ENCODE measurements at regions of chr15 and their contacts with region 1.

Region 1: GRCh38 chr15:23073890-23074646 is 34.7 kb upstream of the TUBGCP5 start:
- DNase-seq: no peak
- ATAC-seq: peak in 1 of 2 donors; percentile 46
- H3K4me3 ChIP-seq: no peak overlapping the region
- H3K27ac ChIP-seq: no peak overlapping the region
- H3K4me1 ChIP-seq: no peaks in the 10 kb centered on the region
- H3K27me3 ChIP-seq: peaks cover 0 to 4% (median 0%) of the 10 kb centered on the region in 3 donors
- CTCF ChIP-seq: no peak
- POLR2A ChIP-seq: no peak

Region 2: DNA sequence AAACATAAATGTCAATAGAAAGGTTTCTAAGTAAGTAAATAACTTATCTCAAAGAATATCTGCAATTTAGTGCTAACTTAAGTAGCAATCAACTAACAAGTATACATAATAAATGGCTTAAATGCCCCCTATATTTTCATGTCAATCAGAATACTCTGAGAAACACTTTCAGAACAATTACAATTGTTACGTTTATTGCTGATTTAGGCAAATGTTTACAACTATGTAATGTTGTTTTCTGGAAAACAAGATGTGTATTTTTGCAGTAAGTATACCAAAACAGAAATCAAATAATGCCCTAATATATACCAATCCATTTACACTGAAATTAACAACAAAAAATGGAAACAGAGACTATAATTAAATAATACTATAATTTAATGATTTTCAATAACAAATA is 47.9 kb before region 1 on chr15:
- in situ Hi-C with region 1: loop called in 1 of 4 experiments (anchors 10 kb)
- intact Hi-C with region 1: no loop called
- DNase-seq: no peak
- ATAC-seq: no peak
- H3K4me3 ChIP-seq: no peak overlapping the region
- H3K27ac ChIP-seq: no peak overlapping the region
- H3K4me1 ChIP-seq: no peaks in the 10 kb centered on the region
- H3K27me3 ChIP-seq: no peaks in the 10 kb centered on the region
- CTCF ChIP-seq: no peak
- POLR2A ChIP-seq: no peak